CD4-positive, alpha-beta T cell (primary cell): ENCODE measurements at regions of chr14 and their contacts with region 1.

Region 1: GRCh38 chr14:73949744-73950734 is at the starts of genes COQ6 and FAM161B:
- DNase-seq: peak; percentile 79 to 98 (median 88)
- ATAC-seq: peak; percentile 92
- H3K4me3 ChIP-seq: peak within 1 kb of the TSS; percentile 96
- H3K4me3 Mint-ChIP-seq: peak within 1 kb of the TSS; percentile 99
- H3K27ac ChIP-seq: peak within 1 kb of the TSS; percentile 94 to 95
- H3K27ac Mint-ChIP-seq: peak within 1 kb of the TSS; percentile 91
- H3K4me1 ChIP-seq: peaks cover 18% of the 10 kb centered on the region
- H3K4me1 Mint-ChIP-seq: peaks cover 32% of the 10 kb centered on the region
- H3K27me3 ChIP-seq: no peaks in the 10 kb centered on the region
- H3K27me3 Mint-ChIP-seq: no peaks in the 10 kb centered on the region
- CTCF ChIP-seq: peak; percentile 27
- total RNA-seq, gene COQ6: 37.1 to 38.9 TPM
- total RNA-seq, gene FAM161B: 1.5 to 1.7 TPM

Region 2: GRCh38 chr14:73644531-73645247 is 305.4 kb before region 1 on chr14 and contains the start of gene DNAL1:
- CTCF ChIA-PET with region 1: no interaction called
- POLR2A ChIA-PET with region 1: interaction called, 5 read pairs
- intact Hi-C with region 1: loop called in 1 of 2 experiments (anchors 5 kb)
- DNase-seq: peak; percentile 82 to 96 (median 88)
- ATAC-seq: peak; percentile 99
- H3K4me3 ChIP-seq: peak within 1 kb of the TSS; percentile 88
- H3K4me3 Mint-ChIP-seq: peak within 1 kb of the TSS; percentile 91
- H3K27ac ChIP-seq: peak within 1 kb of the TSS; percentile 39 to 63
- H3K27ac Mint-ChIP-seq: peak within 1 kb of the TSS; percentile 76
- H3K4me1 ChIP-seq: peaks cover 13% of the 10 kb centered on the region
- H3K4me1 Mint-ChIP-seq: peaks cover 20% of the 10 kb centered on the region
- H3K27me3 ChIP-seq: no peaks in the 10 kb centered on the region
- H3K27me3 Mint-ChIP-seq: no peaks in the 10 kb centered on the region
- CTCF ChIP-seq: no peak
- total RNA-seq, gene DNAL1: 2.9 to 3.7 TPM

Region 3: DNA sequence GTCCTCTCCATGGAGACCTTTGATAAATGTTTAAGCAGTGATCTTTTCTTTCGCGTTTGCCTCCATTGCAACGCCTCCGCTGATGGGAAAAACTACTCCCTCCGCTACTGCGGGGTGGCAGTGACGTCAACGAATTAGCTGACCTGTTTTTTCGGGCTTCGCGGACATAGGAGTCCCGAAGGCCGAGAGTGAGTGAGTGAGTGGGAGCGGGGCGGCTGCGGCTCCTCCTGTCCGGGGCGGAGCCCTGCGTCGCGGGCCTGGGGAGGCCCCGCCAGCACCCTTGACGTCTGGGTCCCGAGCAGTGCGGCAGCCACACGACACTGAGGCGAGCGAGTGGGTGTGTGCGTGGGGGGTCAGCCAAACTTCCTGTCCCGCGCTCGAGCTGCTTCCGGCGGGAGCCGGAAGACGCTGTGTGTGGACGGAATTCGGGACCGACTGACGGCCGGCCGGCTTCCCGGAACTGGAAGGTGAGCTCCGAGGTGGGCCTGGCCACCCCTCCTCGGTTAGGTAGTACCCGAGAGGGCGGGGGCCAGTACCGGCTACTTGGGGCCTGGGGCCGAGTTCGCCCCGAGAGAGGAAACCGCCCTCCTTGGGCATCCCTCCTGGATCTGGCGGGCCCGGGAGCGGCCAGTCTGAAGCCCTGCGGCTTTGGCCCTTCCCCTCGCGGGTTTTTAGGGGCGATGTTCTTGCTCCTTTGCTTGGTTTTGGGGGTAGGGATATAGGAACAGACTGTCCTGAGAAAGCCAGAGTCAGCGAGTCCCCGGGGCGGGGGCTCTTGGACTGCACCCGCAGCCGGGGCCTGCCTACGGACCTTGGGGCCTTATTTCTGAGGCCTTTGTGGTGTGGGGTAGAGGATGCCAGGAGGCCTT is 63.4 kb before region 1 on chr14 and contains the start of gene ZNF410:
- CTCF ChIA-PET with region 1: no interaction called
- POLR2A ChIA-PET with region 1: interaction called, 12 read pairs
- intact Hi-C with region 1: no loop called
- DNase-seq: peak; percentile 66 to 96 (median 78)
- ATAC-seq: peak; percentile 97
- H3K4me3 ChIP-seq: peak within 1 kb of the TSS; percentile 98
- H3K4me3 Mint-ChIP-seq: peak within 1 kb of the TSS; percentile 98
- H3K27ac ChIP-seq: peak within 1 kb of the TSS; percentile 93 to 98
- H3K27ac Mint-ChIP-seq: peak within 1 kb of the TSS; percentile 94
- H3K4me1 ChIP-seq: peaks cover 21% of the 10 kb centered on the region
- H3K4me1 Mint-ChIP-seq: peaks cover 49% of the 10 kb centered on the region
- H3K27me3 ChIP-seq: no peaks in the 10 kb centered on the region
- H3K27me3 Mint-ChIP-seq: no peaks in the 10 kb centered on the region
- CTCF ChIP-seq: no peak
- total RNA-seq, gene ZNF410: 74.3 to 81.1 TPM

Region 4: GRCh38 chr14:74038015-74038859 is 88.2 kb after region 1 on chr14:
- CTCF ChIA-PET with region 1: no interaction called
- POLR2A ChIA-PET with region 1: no interaction called
- intact Hi-C with region 1: loop called (anchors 5 kb)
- DNase-seq: peak in 4 of 14 experiments; percentile 6 to 69 (median 66)
- ATAC-seq: peak; percentile 51
- H3K4me3 ChIP-seq: no peak overlapping the region
- H3K4me3 Mint-ChIP-seq: no peak overlapping the region
- H3K27ac ChIP-seq: no peak overlapping the region
- H3K27ac Mint-ChIP-seq: no peak overlapping the region
- H3K4me1 ChIP-seq: no peaks in the 10 kb centered on the region
- H3K4me1 Mint-ChIP-seq: no peaks in the 10 kb centered on the region
- H3K27me3 ChIP-seq: no peaks in the 10 kb centered on the region
- H3K27me3 Mint-ChIP-seq: no peaks in the 10 kb centered on the region
- CTCF ChIP-seq: peak; percentile 87

Region 5: DNA sequence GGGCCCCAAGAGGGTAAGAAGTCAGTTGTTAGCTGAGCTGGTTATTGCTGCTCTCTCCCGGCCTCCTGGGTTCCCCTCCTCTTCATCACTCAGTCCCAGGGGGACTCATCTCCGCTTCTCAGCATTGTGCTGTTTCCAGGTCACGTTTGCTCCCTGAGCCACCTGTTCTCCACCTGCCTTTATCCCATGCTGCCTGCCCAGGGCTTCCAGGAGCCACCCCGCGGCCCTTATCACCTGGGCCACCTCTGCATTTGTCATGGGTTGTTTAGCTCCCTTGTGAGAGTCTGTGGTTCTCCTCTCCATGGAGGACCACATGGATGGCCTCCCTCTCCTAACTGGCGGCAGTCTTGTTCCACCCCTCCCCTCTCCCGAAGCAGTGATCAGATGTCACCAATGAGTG is 439.9 kb after region 1 on chr14:
- CTCF ChIA-PET with region 1: no interaction called
- POLR2A ChIA-PET with region 1: no interaction called
- intact Hi-C with region 1: no loop called
- DNase-seq: no peak
- ATAC-seq: no peak
- H3K4me3 ChIP-seq: no peak overlapping the region
- H3K4me3 Mint-ChIP-seq: no peak overlapping the region
- H3K27ac ChIP-seq: no peak overlapping the region
- H3K27ac Mint-ChIP-seq: no peak overlapping the region
- H3K4me1 ChIP-seq: no peaks in the 10 kb centered on the region
- H3K4me1 Mint-ChIP-seq: no peaks in the 10 kb centered on the region
- H3K27me3 ChIP-seq: no peaks in the 10 kb centered on the region
- H3K27me3 Mint-ChIP-seq: peaks cover 12% of the 10 kb centered on the region
- CTCF ChIP-seq: no peak